ENCODE measurements at regions of chr2 and their contacts with region 1.

Region 1: DNA sequence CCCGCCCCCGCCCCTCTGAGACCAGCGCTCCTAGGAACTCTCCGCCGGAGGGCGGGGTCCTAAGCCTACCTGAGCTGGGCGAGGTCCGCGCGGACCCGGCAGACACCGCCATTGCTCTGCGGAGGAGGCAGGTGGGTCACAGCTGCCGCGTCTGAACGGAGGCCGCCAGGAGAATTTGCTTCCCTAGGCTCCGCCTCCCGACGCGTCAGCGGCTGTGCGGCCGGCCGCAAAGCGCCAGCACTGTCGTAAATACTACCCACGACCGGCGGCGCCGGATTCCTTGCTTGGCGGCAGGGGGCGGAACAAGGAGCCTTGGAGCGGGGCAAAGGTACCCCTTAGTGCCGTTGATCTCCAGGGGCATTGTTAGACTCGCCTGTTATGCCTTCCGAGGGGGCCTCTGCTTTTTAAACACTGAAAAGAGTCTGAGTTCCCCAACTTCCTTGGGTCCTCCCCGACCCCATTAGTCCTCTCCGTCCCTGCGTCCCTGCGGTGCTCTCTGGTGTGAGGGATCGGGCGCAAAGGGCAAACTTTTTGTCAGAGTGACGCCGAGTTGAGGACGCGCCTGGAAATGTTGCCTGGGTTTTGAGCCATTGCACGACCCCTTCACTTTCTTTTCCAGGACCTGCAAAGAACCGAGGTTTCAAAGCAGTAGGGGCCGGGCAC is at the start of gene GGCX:
- DNase-seq: peak; percentile 87
- H3K4me3 Mint-ChIP-seq: peak within 1 kb of the TSS; percentile 98
- H3K27ac Mint-ChIP-seq: peak within 1 kb of the TSS; percentile 93
- H3K4me1 Mint-ChIP-seq: peaks cover 25% of the 10 kb centered on the region
- H3K27me3 Mint-ChIP-seq: no peaks in the 10 kb centered on the region
- total RNA-seq, gene GGCX: 25.1 and 27.0 TPM in 2 replicates

Region 2: GRCh38 chr2:85354286-85355072 is 207.0 kb before region 1 on chr2 and contains the starts of genes ELMOD3 and RETSAT:
- intact Hi-C with region 1: loop called (anchors 1 kb)
- DNase-seq: peak; percentile 97
- H3K4me3 Mint-ChIP-seq: peak within 1 kb of the TSS; percentile 99
- H3K27ac Mint-ChIP-seq: peak within 1 kb of the TSS; percentile 97
- H3K4me1 Mint-ChIP-seq: peaks cover 31% of the 10 kb centered on the region
- H3K27me3 Mint-ChIP-seq: no peaks in the 10 kb centered on the region
- total RNA-seq, gene ELMOD3: 17.0 and 18.9 TPM in 2 replicates
- total RNA-seq, gene RETSAT: 26.3 and 29.6 TPM in 2 replicates

Region 3: DNA sequence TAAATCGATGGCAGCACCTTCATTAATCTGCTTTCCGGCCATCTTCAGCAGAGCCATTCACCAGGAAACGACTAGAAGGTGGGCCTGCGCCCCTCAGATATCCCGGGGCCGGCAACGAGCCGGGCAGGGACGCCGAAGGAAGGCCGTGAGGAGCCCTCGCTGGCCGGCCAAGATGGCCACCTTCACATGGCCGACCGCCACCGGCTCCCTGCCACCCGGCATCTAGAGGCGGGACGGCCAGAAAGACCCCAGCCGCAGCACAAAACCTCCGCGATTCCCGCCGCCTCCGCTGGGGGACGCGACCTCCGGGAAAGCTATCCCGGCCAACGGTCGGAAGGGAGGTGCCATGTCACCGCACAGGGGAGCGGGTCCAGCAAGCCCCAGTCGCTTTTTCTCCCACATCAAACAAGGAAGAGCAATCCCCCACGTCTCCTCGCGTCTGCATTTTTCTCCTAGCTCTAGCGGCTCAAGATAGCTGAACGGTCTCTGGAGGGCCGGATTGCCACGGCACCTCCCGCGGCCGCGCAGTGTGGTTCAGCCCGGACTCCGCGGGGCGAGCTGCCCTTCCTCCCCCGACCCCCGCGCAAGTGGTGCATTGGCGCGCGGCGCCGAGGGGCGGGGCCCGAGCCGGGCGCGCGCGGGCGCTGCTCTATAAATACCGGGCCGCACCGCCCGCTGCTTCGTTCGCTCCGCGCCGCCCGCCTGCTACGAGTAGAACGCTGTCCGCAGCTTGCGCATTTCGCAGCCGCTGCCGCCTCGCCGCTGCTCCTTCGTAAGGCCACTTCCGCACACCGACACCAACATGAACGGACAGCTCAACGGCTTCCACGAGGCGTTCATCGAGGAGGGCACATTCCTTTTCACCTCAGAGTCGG is 22.7 kb before region 1 on chr2 and contains the start of gene MAT2A:
- intact Hi-C with region 1: loop called (anchors 2 kb)
- DNase-seq: peak; percentile 85
- H3K4me3 Mint-ChIP-seq: peak within 1 kb of the TSS; percentile 97
- H3K27ac Mint-ChIP-seq: peak within 1 kb of the TSS; percentile 97
- H3K4me1 Mint-ChIP-seq: peaks cover 43% of the 10 kb centered on the region
- H3K27me3 Mint-ChIP-seq: no peaks in the 10 kb centered on the region
- total RNA-seq, gene MAT2A: 395 and 403 TPM in 2 replicates

Region 4: GRCh38 chr2:85577386-85578242 is 16.2 kb after region 1 on chr2 and contains the start of gene VAMP8:
- intact Hi-C with region 1: loop called (anchors 2 kb)
- DNase-seq: peak; percentile 45
- H3K4me3 Mint-ChIP-seq: peak within 1 kb of the TSS; percentile 89
- H3K27ac Mint-ChIP-seq: peak within 1 kb of the TSS; percentile 80
- H3K4me1 Mint-ChIP-seq: peaks cover 18% of the 10 kb centered on the region
- H3K27me3 Mint-ChIP-seq: peaks cover 2% of the 10 kb centered on the region
- total RNA-seq, gene VAMP8: 99.7 and 101 TPM in 2 replicates

Region 5: GRCh38 chr2:85595301-85596025 is 34.0 kb after region 1 on chr2 and contains the start of gene RNF181:
- intact Hi-C with region 1: loop called (anchors 1 kb)
- DNase-seq: peak; percentile 91
- H3K4me3 Mint-ChIP-seq: peak within 1 kb of the TSS; percentile 96
- H3K27ac Mint-ChIP-seq: peak within 1 kb of the TSS; percentile 96
- H3K4me1 Mint-ChIP-seq: peaks cover 18% of the 10 kb centered on the region
- H3K27me3 Mint-ChIP-seq: no peaks in the 10 kb centered on the region
- total RNA-seq, gene RNF181: 130 and 134 TPM in 2 replicates

Region 6: DNA sequence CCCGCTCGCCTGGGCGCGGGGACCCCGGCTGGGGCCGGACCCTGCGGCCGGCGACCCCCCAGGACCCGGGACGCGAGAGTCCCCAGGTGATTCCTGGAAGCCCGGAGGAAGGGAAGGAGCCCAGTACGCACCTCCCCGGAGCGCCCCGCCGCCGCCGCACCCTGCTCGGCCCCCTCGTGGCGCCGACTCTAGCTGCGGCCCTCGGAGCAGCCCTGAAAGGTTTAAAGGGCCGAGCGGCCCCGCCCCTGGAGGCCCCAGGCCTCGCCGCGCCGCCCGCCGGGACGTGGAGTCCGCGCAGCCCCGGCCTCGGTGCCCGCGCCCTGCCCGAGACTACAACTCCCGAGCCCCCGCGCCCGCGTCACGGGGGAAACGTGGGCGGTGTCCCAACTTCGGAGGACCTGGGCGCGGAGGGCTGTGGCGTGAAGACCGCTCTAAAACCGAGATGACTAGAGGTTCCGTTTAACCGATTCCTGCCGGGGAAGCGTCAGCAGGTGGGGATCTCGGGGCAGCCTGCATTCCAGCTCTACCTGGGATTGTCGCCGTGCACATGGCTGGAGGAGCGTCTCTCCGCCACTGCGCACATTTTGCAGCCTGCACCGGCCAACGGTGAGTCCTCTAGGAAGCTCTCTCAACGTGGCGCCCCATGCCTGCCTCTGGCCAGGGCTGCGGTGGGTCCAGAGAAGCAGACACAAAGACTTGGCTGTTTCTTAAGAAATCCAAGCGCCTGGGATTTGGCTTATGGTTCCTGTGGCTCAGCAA is 41.2 kb after region 1 on chr2 and contains the start of gene TMEM150A:
- intact Hi-C with region 1: loop called (anchors 2 kb)
- DNase-seq: peak; percentile 75
- H3K4me3 Mint-ChIP-seq: peak within 1 kb of the TSS; percentile 83
- H3K27ac Mint-ChIP-seq: peak within 1 kb of the TSS; percentile 33
- H3K4me1 Mint-ChIP-seq: peaks cover 9% of the 10 kb centered on the region
- H3K27me3 Mint-ChIP-seq: no peaks in the 10 kb centered on the region
- total RNA-seq, gene TMEM150A: 6.5 and 7.0 TPM in 2 replicates

Region 7: GRCh38 chr2:85920810-85921545 is 359.5 kb after region 1 on chr2:
- intact Hi-C with region 1: no loop called
- DNase-seq: no peak
- H3K4me3 Mint-ChIP-seq: no peak overlapping the region
- H3K27ac Mint-ChIP-seq: no peak overlapping the region
- H3K4me1 Mint-ChIP-seq: peaks cover 18% of the 10 kb centered on the region
- H3K27me3 Mint-ChIP-seq: peaks cover 15% of the 10 kb centered on the region